ENCODE measurements at regions of chr13 and their contacts with region 1.

Region 1: GRCh38 chr13:29369060-29369743 is 226.3 kb downstream of the SLC7A1 start:
- DNase-seq: no peak
- CTCF ChIP-seq: peak; percentile 39

Region 2: DNA sequence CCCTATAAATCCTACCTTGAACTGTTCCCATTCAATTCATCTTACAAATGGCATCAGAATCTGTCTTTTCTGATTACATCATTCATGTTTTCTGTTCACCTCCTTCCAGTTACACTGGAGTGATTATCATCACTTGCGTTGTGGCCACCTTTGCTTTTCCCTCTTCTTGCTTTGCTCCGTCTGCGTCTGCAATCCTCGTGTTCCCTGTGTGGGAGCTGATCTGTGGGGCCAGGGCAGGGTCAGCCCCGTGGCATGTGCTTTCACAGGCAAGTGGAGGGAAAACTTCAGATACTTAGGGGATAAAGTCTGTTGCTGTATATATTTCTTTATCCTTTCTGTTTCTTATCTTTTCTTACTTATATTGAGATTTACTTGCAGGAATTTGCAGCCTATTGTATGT is 51.4 kb before region 1 on chr13:
- CTCF ChIA-PET with region 1: no interaction called
- POLR2A ChIA-PET with region 1: no interaction called
- DNase-seq: no peak
- CTCF ChIP-seq: no peak

Region 3: DNA sequence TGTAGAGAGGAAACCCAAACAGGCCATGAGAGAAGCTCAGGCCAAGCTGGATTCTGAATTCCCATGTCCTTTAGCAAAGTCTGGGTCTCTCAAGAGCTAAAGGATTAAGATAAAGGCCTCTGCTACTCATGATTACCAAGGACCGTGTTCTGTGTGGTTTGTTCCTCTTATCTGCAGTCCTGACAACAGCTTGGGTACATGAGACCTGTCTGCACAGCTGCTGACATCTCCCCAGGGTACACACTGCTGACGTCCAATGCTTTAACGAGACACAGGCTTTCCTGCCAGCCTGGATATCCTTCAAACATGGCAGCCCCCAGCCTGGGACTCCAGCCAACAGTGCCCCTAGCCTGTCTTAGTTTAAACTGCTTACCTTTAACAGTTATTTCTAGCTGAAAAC is 15.3 kb after region 1 on chr13:
- CTCF ChIA-PET with region 1: interaction called, 10 read pairs
- POLR2A ChIA-PET with region 1: no interaction called
- DNase-seq: no peak
- CTCF ChIP-seq: no peak